WTC11 (cell line): ENCODE measurements at regions of chr12 and their contacts with region 1.

Region 1: GRCh38 chr12:121811434-121812319 is 7.9 kb downstream of the SETD1B start:
- DNase-seq: peak; percentile 80
- ATAC-seq: peak; percentile 77
- H3K4me3 Mint-ChIP-seq: peak overlapping the region; percentile 87
- H3K27ac Mint-ChIP-seq: peak overlapping the region; percentile 86
- H3K4me1 Mint-ChIP-seq: peaks cover 32% of the 10 kb centered on the region
- H3K27me3 Mint-ChIP-seq: no peaks in the 10 kb centered on the region
- CTCF ChIP-seq: peak; percentile 98

Region 2: GRCh38 chr12:121786441-121786825 is 25.2 kb before region 1 on chr12:
- CTCF ChIA-PET with region 1: interaction called, 14 read pairs
- POLR2A ChIA-PET with region 1: interaction called, 3 read pairs
- DNase-seq: no peak
- ATAC-seq: 0 out of 2 replicates have a peak, but pooled peaks have one; percentile 7
- H3K4me3 Mint-ChIP-seq: no peak overlapping the region
- H3K27ac Mint-ChIP-seq: no peak overlapping the region
- H3K4me1 Mint-ChIP-seq: peaks cover 20% of the 10 kb centered on the region
- H3K27me3 Mint-ChIP-seq: no peaks in the 10 kb centered on the region; the same call in 1 of the 2 replicates
- CTCF ChIP-seq: no peak

Region 3: GRCh38 chr12:121829250-121829918 is 17.7 kb after region 1 on chr12:
- CTCF ChIA-PET with region 1: interaction called, 26 read pairs
- POLR2A ChIA-PET with region 1: interaction called, 4 read pairs
- DNase-seq: no peak
- ATAC-seq: no peak
- H3K4me3 Mint-ChIP-seq: no peak overlapping the region
- H3K27ac Mint-ChIP-seq: no peak overlapping the region
- H3K4me1 Mint-ChIP-seq: no peaks in the 10 kb centered on the region
- H3K27me3 Mint-ChIP-seq: no peaks in the 10 kb centered on the region
- CTCF ChIP-seq: no peak

Region 4: DNA sequence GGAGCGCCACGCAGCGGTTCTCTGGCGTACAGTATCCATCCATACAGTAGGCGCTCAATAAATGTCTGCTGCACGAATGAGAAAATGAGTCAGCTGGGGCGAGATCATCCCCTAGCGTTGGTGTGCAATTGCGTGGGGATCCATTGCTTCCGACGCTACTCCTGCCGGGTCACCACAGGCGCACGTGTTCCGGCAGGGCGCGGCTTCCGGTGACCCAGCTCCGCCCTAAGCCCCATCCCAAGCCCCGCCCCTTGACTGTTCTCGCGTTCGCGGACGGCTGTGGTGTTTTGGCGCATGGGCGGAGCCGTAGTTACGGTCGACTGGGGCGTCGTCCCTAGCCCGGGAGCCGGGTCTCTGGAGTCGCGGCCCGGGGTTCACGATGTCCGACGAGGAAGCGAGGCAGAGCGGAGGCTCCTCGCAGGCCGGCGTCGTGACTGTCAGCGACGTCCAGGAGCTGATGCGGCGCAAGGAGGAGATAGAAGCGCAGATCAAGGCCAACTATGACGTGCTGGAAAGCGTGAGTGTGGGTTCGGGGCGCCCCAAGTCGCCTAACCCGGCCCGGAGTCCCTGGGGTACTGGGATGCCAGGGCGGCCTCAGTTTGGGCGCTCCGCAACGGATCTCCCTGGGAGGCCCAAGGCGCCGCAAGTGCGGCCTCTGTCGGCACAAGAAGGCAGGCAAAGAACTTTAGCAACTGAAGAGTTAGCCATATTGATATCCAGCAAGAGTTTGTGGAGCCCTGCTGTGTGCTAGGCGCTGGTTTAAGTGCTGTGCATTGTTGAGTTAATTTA is 77.0 kb after region 1 on chr12 and contains the start of gene PSMD9:
- CTCF ChIA-PET with region 1: interaction called, 20 read pairs
- POLR2A ChIA-PET with region 1: interaction called, 8 read pairs
- DNase-seq: peak; percentile 98
- ATAC-seq: peak; percentile 94
- H3K4me3 Mint-ChIP-seq: peak within 1 kb of the TSS; percentile 95
- H3K27ac Mint-ChIP-seq: peak within 1 kb of the TSS; percentile 99
- H3K4me1 Mint-ChIP-seq: peaks cover 20% of the 10 kb centered on the region
- H3K27me3 Mint-ChIP-seq: peaks cover 26% of the 10 kb centered on the region
- CTCF ChIP-seq: peak; percentile 26; the same call in 1 of the 2 replicates
- total RNA-seq, gene PSMD9: 35.3 to 36.4 TPM (median 36.2 TPM) in 3 replicates

Region 5: GRCh38 chr12:122244565-122245371 is 433.1 kb after region 1 on chr12:
- CTCF ChIA-PET with region 1: no interaction called
- POLR2A ChIA-PET with region 1: no interaction called
- DNase-seq: no peak
- ATAC-seq: no peak
- H3K4me3 Mint-ChIP-seq: no peak overlapping the region
- H3K27ac Mint-ChIP-seq: no peak overlapping the region
- H3K4me1 Mint-ChIP-seq: no peaks in the 10 kb centered on the region
- H3K27me3 Mint-ChIP-seq: no peaks in the 10 kb centered on the region
- CTCF ChIP-seq: no peak